Tibial artery (tissue), 4 donors: ENCODE measurements at regions of chr1 and their contacts with region 1.

Region 1: GRCh38 chr1:45785583-45785982 is 17.8 kb upstream of the MAST2 start:
- DNase-seq: no peak
- H3K4me3 ChIP-seq: no peak overlapping the region
- H3K27ac ChIP-seq: no peak overlapping the region
- H3K4me1 ChIP-seq: no peaks in the 10 kb centered on the region
- H3K27me3 ChIP-seq: no peaks in the 10 kb centered on the region
- CTCF ChIP-seq: no peak

Region 2: GRCh38 chr1:45987204-45987603 is 201.6 kb after region 1 on chr1:
- intact Hi-C with region 1: loop called (anchors 5 kb)
- DNase-seq: no peak
- H3K4me3 ChIP-seq: no peak overlapping the region
- H3K27ac ChIP-seq: no peak overlapping the region
- H3K4me1 ChIP-seq: no peaks in the 10 kb centered on the region
- H3K27me3 ChIP-seq: no peaks in the 10 kb centered on the region
- CTCF ChIP-seq: no peak